ENCODE measurements at regions of chr22 and their contacts with region 1.

Region 1: GRCh38 chr22:22168190-22168940 is 76.2 kb upstream of the VPREB1 start:
- DNase-seq: peak; percentile 96
- H3K4me3 ChIP-seq: peak overlapping the region; percentile 69
- H3K27ac ChIP-seq: peak overlapping the region; percentile 99
- H3K4me1 ChIP-seq: peaks cover 84% of the 10 kb centered on the region
- CTCF ChIP-seq: no peak

Region 2: GRCh38 chr22:22043296-22044078 is 124.9 kb before region 1 on chr22:
- CTCF ChIA-PET with region 1: interaction called, 5 read pairs
- POLR2A ChIA-PET with region 1: interaction called, 26 read pairs
- intact Hi-C with region 1: loop called (anchors 2 kb)
- DNase-seq: peak; percentile 81
- H3K4me3 ChIP-seq: peak overlapping the region; percentile 70
- H3K27ac ChIP-seq: peak overlapping the region; percentile 84
- H3K4me1 ChIP-seq: peaks cover 96% of the 10 kb centered on the region
- CTCF ChIP-seq: peak; percentile 70

Region 3: GRCh38 chr22:22156716-22157347 is 11.5 kb before region 1 on chr22:
- CTCF ChIA-PET with region 1: interaction called, 17 read pairs
- POLR2A ChIA-PET with region 1: interaction called, 19 read pairs
- intact Hi-C with region 1: loop called (anchors 1 kb)
- DNase-seq: peak; percentile 94
- H3K4me3 ChIP-seq: peak overlapping the region; percentile 46
- H3K27ac ChIP-seq: peak overlapping the region; percentile 84
- H3K4me1 ChIP-seq: peaks cover 55% of the 10 kb centered on the region
- CTCF ChIP-seq: peak; percentile 96

Region 4: GRCh38 chr22:22201185-22201929 is 33.0 kb after region 1 on chr22:
- CTCF ChIA-PET with region 1: interaction called, 9 read pairs
- POLR2A ChIA-PET with region 1: interaction called, 93 read pairs
- intact Hi-C with region 1: no loop called
- DNase-seq: peak; percentile 94
- H3K4me3 ChIP-seq: peak overlapping the region; percentile 52
- H3K27ac ChIP-seq: peak overlapping the region; percentile 95
- H3K4me1 ChIP-seq: peaks cover 85% of the 10 kb centered on the region
- CTCF ChIP-seq: peak; percentile 94

Region 5: GRCh38 chr22:23036684-23037428 is 868.5 kb after region 1 on chr22:
- CTCF ChIA-PET with region 1: no interaction called
- POLR2A ChIA-PET with region 1: no interaction called
- intact Hi-C with region 1: loop called (anchors 10 kb)
- DNase-seq: peak; percentile 58
- H3K4me3 ChIP-seq: peak overlapping the region; percentile 17
- H3K27ac ChIP-seq: peak overlapping the region; percentile 98
- H3K4me1 ChIP-seq: peaks cover 80% of the 10 kb centered on the region
- CTCF ChIP-seq: no peak

Measured in OCI-LY7 (cell line).